Cardiac septum (tissue), 1 donor: ENCODE measurements at regions of chr12 and their contacts with region 1.

Region 1: GRCh38 chr12:6662906-6663742 is at the start of gene ING4:
- DNase-seq: peak; percentile 99
- total RNA-seq, gene ING4: 20.6 TPM

Region 2: DNA sequence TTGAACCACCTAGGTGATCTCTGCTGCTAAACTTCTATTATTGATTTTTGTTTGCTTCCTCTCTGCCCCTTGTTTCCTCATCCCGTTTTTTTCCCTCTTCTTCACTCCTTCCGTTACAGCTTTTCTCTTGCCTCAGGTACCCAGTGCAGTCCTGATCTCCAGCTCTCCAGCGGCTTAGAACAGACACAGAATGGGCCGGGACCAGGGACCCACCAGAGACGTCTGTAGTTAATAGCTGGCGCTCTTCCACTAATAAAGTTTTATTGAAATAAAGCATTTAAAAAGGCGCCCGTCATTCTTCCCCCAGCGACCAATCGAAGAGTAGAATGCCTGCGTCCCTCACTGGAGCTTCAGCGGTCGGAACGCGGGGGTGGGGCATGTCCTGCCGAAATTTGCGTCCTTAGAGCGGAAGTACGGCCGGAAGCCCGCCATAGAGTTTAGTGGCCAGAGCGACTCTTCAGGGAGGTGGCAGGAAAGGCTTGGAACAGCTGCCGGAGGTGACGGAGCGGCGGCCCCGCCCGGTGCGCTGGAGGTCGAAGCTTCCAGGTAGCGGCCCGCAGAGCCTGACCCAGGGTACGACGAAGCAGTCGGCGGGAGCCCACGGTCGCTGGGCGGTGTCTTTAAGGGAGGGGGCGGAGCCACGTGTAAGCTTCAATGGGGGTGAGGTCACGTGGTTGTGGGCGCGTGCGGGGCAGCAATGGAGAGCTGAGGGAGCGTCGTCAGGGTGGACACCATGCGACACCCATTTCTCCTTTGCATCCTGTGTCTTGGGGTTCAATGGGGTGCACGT is 60.7 kb after region 1 on chr12 and contains the start of gene COPS7A:
- intact Hi-C with region 1: loop called (anchors 1 kb)
- DNase-seq: peak; percentile 99
- total RNA-seq, gene COPS7A: 64.7 TPM